ENCODE measurements at regions of chr20 and their contacts with region 1.

Region 1: GRCh38 chr20:21235484-21236445 is 67.4 kb upstream of the XRN2 start:
- DNase-seq: peak; percentile 32 to 56 (median 46)
- ATAC-seq: peak; percentile 46; the same call in 2 of the 3 replicates
- H3K4me3 ChIP-seq: no peak overlapping the region
- H3K27ac ChIP-seq: no peak overlapping the region
- H3K4me1 ChIP-seq: no peaks in the 10 kb centered on the region
- H3K27me3 ChIP-seq: no peaks in the 10 kb centered on the region
- CTCF ChIP-seq: peak; percentile 70 to 80 (median 77)
- EP300 ChIP-seq: no peak
- POLR2A ChIP-seq: no peak
- RAD21 ChIP-seq: peak; percentile 62 to 67

Region 2: GRCh38 chr20:19775360-19776253 is 1460.2 kb before region 1 on chr20:
- CTCF ChIA-PET with region 1: no interaction called
- POLR2A ChIA-PET with region 1: no interaction called
- in situ Hi-C with region 1: no loop called
- intact Hi-C with region 1: no loop called
- DNase-seq: no peak
- ATAC-seq: no peak
- H3K4me3 ChIP-seq: no peak overlapping the region
- H3K27ac ChIP-seq: no peak overlapping the region
- H3K4me1 ChIP-seq: no peaks in the 10 kb centered on the region
- H3K27me3 ChIP-seq: peaks cover 0 to 5% of the 10 kb centered on the region in 2 experiments; a peak in 1 of 5 replicates
- CTCF ChIP-seq: no peak
- EP300 ChIP-seq: no peak
- POLR2A ChIP-seq: no peak
- RAD21 ChIP-seq: no peak

Region 3: DNA sequence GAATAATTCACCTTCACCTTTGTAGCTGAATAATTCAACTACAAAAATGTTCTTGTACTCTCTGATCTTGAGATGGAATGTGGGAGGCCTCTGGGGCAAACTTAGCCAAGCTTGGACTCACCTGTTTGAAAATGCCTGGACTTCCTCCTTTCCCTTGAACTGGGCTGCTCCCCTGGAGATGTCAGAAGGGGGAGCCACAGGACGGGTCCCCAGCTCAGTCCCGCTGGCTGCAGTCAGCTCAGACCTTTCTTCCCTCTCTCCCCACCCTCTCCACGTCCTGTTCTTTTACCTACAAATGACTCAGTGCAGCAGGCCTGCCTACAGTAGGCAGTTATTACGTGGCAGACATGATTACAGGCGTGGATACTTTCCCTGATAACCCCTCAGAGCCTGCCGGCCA is 391.8 kb before region 1 on chr20:
- CTCF ChIA-PET with region 1: interaction called, 4 read pairs
- POLR2A ChIA-PET with region 1: no interaction called
- in situ Hi-C with region 1: loop called (anchors 10 kb)
- intact Hi-C with region 1: no loop called
- DNase-seq: peak in 1 of 4 experiments; percentile 12
- ATAC-seq: peak; percentile 51; the same call in 2 of the 3 replicates
- H3K4me3 ChIP-seq: no peak overlapping the region
- H3K27ac ChIP-seq: no peak overlapping the region
- H3K4me1 ChIP-seq: no peaks in the 10 kb centered on the region; a peak in 1 of 5 replicates
- H3K27me3 ChIP-seq: peaks cover 0 to 5% of the 10 kb centered on the region in 2 experiments; a peak in 2 of 5 replicates
- CTCF ChIP-seq: peak in 2 of 3 experiments; percentile 18 to 37; a peak in 2 of 6 replicates
- EP300 ChIP-seq: no peak
- POLR2A ChIP-seq: no peak
- RAD21 ChIP-seq: no peak

Region 4: DNA sequence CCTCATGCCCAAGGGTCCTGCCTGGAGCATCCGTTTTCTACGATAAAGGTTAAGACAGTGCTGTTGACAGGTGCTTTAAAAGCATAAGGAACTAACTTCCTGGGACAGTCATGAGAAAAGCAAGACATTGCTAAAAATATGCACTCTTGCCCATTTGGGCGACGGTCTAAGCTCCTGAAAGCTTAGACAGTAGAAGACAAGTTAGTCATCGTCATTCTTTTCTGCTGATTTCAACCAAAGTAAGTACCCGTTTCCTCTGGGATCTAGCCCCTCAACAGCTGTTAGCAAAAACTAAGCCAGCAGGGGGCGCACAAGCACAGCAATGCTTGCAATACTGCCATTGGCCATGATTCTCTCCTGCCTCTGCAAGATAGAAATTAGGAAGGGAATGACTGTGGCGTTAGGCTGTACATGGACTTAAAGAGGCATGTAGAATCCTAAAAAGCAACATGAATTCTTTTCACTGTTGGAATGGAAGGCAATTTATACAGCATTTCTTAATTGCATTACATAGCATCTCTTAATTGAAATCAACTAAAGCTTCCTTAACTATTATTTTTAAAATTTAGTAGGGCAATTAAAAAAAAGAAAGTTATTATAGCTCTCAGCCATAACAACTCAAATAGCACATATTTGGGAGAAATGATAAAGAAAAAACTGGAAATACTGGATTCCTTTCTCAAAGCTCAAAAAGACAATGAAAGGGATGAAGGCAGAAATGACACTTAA is 375.5 kb before region 1 on chr20:
- CTCF ChIA-PET with region 1: interaction called, 3 read pairs
- POLR2A ChIA-PET with region 1: no interaction called
- in situ Hi-C with region 1: no loop called
- intact Hi-C with region 1: loop called (anchors 5 kb)
- DNase-seq: peak; percentile 67 to 79 (median 72)
- ATAC-seq: peak; percentile 93
- H3K4me3 ChIP-seq: no peak overlapping the region
- H3K27ac ChIP-seq: no peak overlapping the region
- H3K4me1 ChIP-seq: no peaks in the 10 kb centered on the region
- H3K27me3 ChIP-seq: peaks cover 0 to 3% of the 10 kb centered on the region in 2 experiments; a peak in 2 of 5 replicates
- CTCF ChIP-seq: peak; percentile 74 to 96 (median 85)
- EP300 ChIP-seq: no peak
- POLR2A ChIP-seq: no peak
- RAD21 ChIP-seq: peak; percentile 55 to 76

Region 5: GRCh38 chr20:21048841-21049273 is 186.9 kb before region 1 on chr20:
- CTCF ChIA-PET with region 1: no interaction called
- POLR2A ChIA-PET with region 1: no interaction called
- in situ Hi-C with region 1: no loop called
- intact Hi-C with region 1: loop called (anchors 10 kb)
- DNase-seq: peak; percentile 51 to 74 (median 70)
- ATAC-seq: peak; percentile 96
- H3K4me3 ChIP-seq: no peak overlapping the region
- H3K27ac ChIP-seq: no peak overlapping the region
- H3K4me1 ChIP-seq: no peaks in the 10 kb centered on the region
- H3K27me3 ChIP-seq: peaks cover 0 to 5% of the 10 kb centered on the region in 2 experiments; a peak in 2 of 5 replicates
- CTCF ChIP-seq: peak; percentile 67 to 79 (median 71)
- EP300 ChIP-seq: no peak
- POLR2A ChIP-seq: no peak
- RAD21 ChIP-seq: peak; percentile 35 to 62; a peak in 3 of 4 replicates

Region 6: GRCh38 chr20:21189761-21190523 is 45.8 kb before region 1 on chr20:
- CTCF ChIA-PET with region 1: no interaction called
- POLR2A ChIA-PET with region 1: no interaction called
- in situ Hi-C with region 1: no loop called
- intact Hi-C with region 1: no loop called
- DNase-seq: no peak
- ATAC-seq: no peak
- H3K4me3 ChIP-seq: no peak overlapping the region
- H3K27ac ChIP-seq: no peak overlapping the region
- H3K4me1 ChIP-seq: no peaks in the 10 kb centered on the region
- H3K27me3 ChIP-seq: no peaks in the 10 kb centered on the region
- CTCF ChIP-seq: no peak
- EP300 ChIP-seq: no peak
- POLR2A ChIP-seq: no peak
- RAD21 ChIP-seq: no peak

Measured in K562 (cell line).